BJ (cell line): ENCODE measurements at regions of chr13 and their contacts with region 1.

Region 1: GRCh38 chr13:44435142-44435982 is 61.7 kb downstream of the SERP2 start:
- DNase-seq: peak; percentile 87
- H3K4me3 ChIP-seq: peak overlapping the region; percentile 72
- H3K27me3 ChIP-seq: no peaks in the 10 kb centered on the region
- CTCF ChIP-seq: no peak

Region 2: GRCh38 chr13:44050450-44051063 is 384.8 kb before region 1 on chr13:
- CTCF ChIA-PET with region 1: interaction called, 28 read pairs
- POLR2A ChIA-PET with region 1: no interaction called
- DNase-seq: no peak
- H3K4me3 ChIP-seq: no peak overlapping the region
- H3K27me3 ChIP-seq: peaks cover 8% of the 10 kb centered on the region
- CTCF ChIP-seq: peak; percentile 76

Region 3: GRCh38 chr13:44141725-44142539 is 293.4 kb before region 1 on chr13:
- CTCF ChIA-PET with region 1: interaction called, 3 read pairs
- POLR2A ChIA-PET with region 1: interaction called, 16 read pairs
- DNase-seq: peak; percentile 59
- H3K4me3 ChIP-seq: peak overlapping the region; percentile 51
- H3K27me3 ChIP-seq: no peaks in the 10 kb centered on the region; the same call in 1 of the 2 replicates
- CTCF ChIP-seq: no peak; the same call in 1 of the 2 replicates

Region 4: DNA sequence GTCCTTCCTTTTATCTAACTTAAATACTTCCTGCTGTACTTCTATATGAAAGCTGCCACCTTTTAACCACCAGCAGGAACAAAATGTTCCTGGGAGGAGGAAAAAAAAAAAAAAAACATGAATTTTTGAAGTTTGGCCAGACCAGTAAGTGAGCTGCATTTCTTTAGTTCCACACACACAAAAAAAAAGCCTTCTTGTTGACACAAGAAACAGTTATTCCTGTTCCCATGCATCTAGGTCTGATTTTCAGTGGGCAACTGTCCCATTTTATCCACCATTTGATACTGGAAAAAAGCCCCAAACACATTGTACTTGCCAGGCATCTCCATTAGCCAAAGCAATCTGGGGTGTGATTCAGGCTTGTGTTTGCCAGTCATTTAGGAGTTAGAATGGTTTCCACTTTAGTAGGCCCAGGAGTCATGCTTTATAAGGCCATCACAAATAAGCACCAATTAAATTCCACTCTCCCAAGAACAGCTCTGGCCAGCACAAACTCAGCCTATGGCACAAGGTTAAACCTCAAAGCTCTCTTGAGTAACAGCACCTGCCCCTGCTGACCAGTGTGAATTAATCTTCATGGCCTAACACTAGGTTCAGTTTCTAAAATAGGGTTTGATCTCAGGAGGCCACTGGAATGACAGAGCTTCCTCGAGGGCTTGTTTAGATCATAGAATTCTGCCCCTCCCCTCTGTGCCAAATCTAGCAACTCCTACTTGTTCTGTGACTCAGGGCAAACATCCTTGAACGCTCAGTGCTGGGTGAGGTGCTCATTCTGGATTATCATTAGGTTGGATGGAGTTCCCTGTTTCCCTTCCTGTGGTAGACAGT is 486.8 kb after region 1 on chr13:
- CTCF ChIA-PET with region 1: no interaction called
- POLR2A ChIA-PET with region 1: interaction called, 19 read pairs
- DNase-seq: peak; percentile 81
- H3K4me3 ChIP-seq: no peak overlapping the region
- H3K27me3 ChIP-seq: no peaks in the 10 kb centered on the region; the same call in 1 of the 2 replicates
- CTCF ChIP-seq: no peak